ENCODE measurements at regions of chr6 and their contacts with region 1.

Region 1: DNA sequence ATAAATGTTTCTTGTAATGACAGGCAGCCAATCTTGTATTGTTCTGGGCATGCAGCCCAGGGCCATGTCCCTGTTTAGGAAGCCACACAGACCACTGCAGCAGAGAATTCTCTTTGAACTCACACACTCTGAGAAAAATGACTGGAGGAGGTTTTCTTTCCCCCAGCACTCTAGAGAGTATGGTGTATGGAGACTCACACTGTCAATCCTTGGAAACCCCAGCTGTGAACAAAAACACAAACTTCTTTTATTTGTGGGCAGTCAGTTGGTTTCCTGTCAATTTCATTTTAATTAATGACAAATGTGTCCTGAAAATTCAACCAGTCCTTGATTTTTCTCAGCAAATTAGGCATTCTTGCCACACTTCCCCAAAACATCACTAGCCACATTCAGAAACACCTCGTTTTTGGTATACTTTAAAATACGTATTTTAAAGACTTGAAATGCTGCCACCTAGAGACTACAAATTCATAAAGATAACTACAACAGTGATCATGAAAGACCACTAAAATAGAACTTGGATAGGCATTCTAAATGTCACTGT is 52.9 kb upstream of the UFL1 start:
- DNase-seq: no peak
- ATAC-seq: no peak
- H3K4me3 Mint-ChIP-seq: no peak overlapping the region
- H3K27ac Mint-ChIP-seq: no peak overlapping the region
- H3K4me1 Mint-ChIP-seq: peaks cover 1% of the 10 kb centered on the region
- H3K27me3 Mint-ChIP-seq: peaks cover 2% of the 10 kb centered on the region
- CTCF ChIP-seq: no peak

Region 2: DNA sequence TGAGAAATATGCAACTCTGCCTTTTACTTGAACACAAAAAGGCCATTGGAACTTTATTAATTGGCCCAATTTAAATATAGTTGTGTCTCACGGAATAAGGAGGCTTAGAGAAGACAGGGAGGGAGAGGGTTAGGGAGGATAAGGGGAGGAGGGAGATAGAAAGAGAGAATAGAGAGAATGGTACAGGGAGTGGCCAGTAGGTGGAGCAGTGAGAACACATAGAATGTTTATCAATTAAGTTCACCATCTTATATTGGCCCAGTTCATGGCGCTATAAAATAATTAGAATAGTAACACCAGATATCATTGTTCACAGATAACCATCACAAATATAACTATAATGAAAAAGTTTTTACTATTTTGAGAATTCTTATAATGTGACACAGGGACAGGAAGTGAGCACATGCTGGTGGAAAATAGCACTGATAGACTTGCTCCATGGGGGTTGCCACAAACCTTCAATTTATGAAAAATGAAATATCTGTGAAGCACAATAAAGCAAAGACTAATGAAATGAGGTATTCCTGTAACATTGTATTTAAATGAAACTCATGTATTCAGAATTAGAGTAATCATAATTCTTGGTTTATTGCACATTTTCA is 1265.5 kb before region 1 on chr6:
- CTCF ChIA-PET with region 1: no interaction called
- POLR2A ChIA-PET with region 1: no interaction called
- intact Hi-C with region 1: loop called (anchors 2 kb)
- DNase-seq: no peak
- ATAC-seq: no peak
- H3K4me3 Mint-ChIP-seq: no peak overlapping the region
- H3K27ac Mint-ChIP-seq: no peak overlapping the region
- H3K4me1 Mint-ChIP-seq: no peaks in the 10 kb centered on the region
- H3K27me3 Mint-ChIP-seq: no peaks in the 10 kb centered on the region
- CTCF ChIP-seq: no peak

Region 3: GRCh38 chr6:95431637-95432228 is 1037.0 kb before region 1 on chr6:
- CTCF ChIA-PET with region 1: no interaction called
- POLR2A ChIA-PET with region 1: no interaction called
- intact Hi-C with region 1: loop called (anchors 1 kb)
- DNase-seq: no peak
- ATAC-seq: no peak
- H3K4me3 Mint-ChIP-seq: no peak overlapping the region
- H3K27ac Mint-ChIP-seq: no peak overlapping the region
- H3K4me1 Mint-ChIP-seq: no peaks in the 10 kb centered on the region
- H3K27me3 Mint-ChIP-seq: no peaks in the 10 kb centered on the region
- CTCF ChIP-seq: no peak

Region 4: GRCh38 chr6:96436393-96436792 is 32.4 kb before region 1 on chr6:
- CTCF ChIA-PET with region 1: no interaction called
- POLR2A ChIA-PET with region 1: no interaction called
- intact Hi-C with region 1: no loop called
- DNase-seq: no peak
- ATAC-seq: no peak
- H3K4me3 Mint-ChIP-seq: no peak overlapping the region
- H3K27ac Mint-ChIP-seq: no peak overlapping the region
- H3K4me1 Mint-ChIP-seq: no peaks in the 10 kb centered on the region
- H3K27me3 Mint-ChIP-seq: no peaks in the 10 kb centered on the region
- CTCF ChIP-seq: no peak

Measured in activated B cell treated with CpG ODN at 0.5 μM for 24 hours (primary cell).